RWPE1 (cell line): ENCODE measurements at regions of chr3 and their contacts with region 1.

Region 1: GRCh38 chr3:8769088-8769822 is at the start of gene OXTR:
- DNase-seq: peak; percentile 70
- H3K27ac ChIP-seq: no peak within 1 kb of the TSS
- CTCF ChIP-seq: peak; percentile 99

Region 2: DNA sequence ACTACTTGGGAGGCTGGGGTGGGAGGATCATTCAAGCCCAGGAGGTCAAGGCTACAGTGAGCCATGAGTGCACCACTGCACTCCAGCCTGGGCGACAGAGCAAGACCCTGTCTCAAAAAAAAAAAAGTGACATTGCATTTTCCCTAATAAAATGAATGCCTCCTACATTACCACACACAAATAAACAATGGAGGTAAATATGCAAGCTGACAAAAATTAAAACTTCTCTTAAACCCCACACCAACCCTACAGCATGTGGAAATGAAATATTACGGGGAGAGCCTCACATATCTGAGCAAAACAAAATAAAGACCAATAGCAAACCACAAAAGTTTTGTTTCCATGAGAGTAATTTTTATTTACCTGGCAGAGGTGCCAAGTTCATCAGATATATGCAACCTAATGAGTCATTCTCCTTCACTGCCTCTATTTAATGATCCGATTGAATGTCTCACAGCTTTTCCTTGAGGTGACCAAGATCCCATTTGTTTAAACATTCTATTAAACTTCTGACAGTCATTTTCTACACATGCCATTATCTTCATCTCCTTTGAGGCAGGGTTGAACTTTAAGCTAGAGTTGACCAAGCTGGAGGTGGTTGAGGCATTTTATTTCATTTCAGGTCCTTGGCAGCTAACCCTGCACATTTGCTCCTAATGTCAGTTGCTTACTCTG is 45.0 kb before region 1 on chr3:
- CTCF ChIA-PET with region 1: interaction called, 10 read pairs
- POLR2A ChIA-PET with region 1: no interaction called
- DNase-seq: peak; percentile 41
- H3K27ac ChIP-seq: no peak overlapping the region
- CTCF ChIP-seq: no peak